Mammary epithelial cell (primary cell): ENCODE measurements at regions of chr20 and their contacts with region 1.

Region 1: DNA sequence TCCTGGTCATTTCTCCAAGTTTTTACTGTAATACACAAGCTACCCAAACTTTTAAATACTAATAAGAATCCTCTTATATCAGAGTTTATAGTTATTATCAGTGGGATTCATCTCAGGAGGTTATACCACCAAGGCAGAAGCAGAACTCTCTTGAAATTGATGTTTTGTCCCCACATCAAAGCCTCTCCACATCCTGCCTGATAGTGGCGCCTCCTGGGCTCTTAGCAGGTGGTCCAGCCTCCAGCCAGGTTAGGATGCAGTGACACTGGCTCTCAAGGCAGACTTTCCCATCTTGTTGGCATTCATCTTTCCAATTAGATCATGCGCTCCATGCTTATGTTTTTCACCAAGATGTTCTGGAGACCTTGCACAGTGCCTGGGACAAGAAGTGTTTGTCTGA is 81.8 kb upstream of the INSM1 start:
- DNase-seq: no peak
- H3K4me3 ChIP-seq: no peak overlapping the region
- H3K27ac ChIP-seq: no peak overlapping the region
- H3K4me1 ChIP-seq: no peaks in the 10 kb centered on the region
- H3K27me3 ChIP-seq: no peaks in the 10 kb centered on the region
- CTCF ChIP-seq: no peak

Region 2: GRCh38 chr20:20343932-20344331 is 57.9 kb after region 1 on chr20:
- CTCF ChIA-PET with region 1: no interaction called
- dilution Hi-C with region 1: loop called (anchors 5 kb)
- in situ Hi-C with region 1: no loop called
- intact Hi-C with region 1: no loop called
- DNase-seq: no peak
- H3K4me3 ChIP-seq: no peak overlapping the region
- H3K27ac ChIP-seq: no peak overlapping the region
- H3K4me1 ChIP-seq: no peaks in the 10 kb centered on the region
- H3K27me3 ChIP-seq: no peaks in the 10 kb centered on the region
- CTCF ChIP-seq: no peak